Left ventricle myocardium inferior (tissue), 1 donor: ENCODE measurements at regions of chr12 and their contacts with region 1.

Region 1: GRCh38 chr12:77925536-77926108 is 94.9 kb downstream of the NAV3 start:
- DNase-seq: peak; percentile 46
- H3K4me3 ChIP-seq: peak overlapping the region; percentile 20
- H3K27ac ChIP-seq: no peak overlapping the region
- H3K4me1 ChIP-seq: peaks cover 5% of the 10 kb centered on the region
- H3K27me3 ChIP-seq: no peaks in the 10 kb centered on the region
- CTCF ChIP-seq: peak; percentile 91

Region 2: GRCh38 chr12:77724367-77724957 is 201.2 kb before region 1 on chr12:
- intact Hi-C with region 1: loop called (anchors 1 kb)
- DNase-seq: no peak
- H3K4me3 ChIP-seq: no peak overlapping the region
- H3K27ac ChIP-seq: no peak overlapping the region
- H3K4me1 ChIP-seq: peaks cover 9% of the 10 kb centered on the region
- H3K27me3 ChIP-seq: no peaks in the 10 kb centered on the region
- CTCF ChIP-seq: peak; percentile 78